Endothelial cell of umbilical vein (primary cell): ENCODE measurements at regions of chr7 and their contacts with region 1.

Region 1: GRCh38 chr7:56079450-56080185 is 13.1 kb downstream of the PHKG1 start:
- DNase-seq: peak; percentile 93
- H3K4me3 ChIP-seq: no peak overlapping the region
- H3K27ac ChIP-seq: peak overlapping the region; percentile 73
- H3K4me1 ChIP-seq: peaks cover 26% of the 10 kb centered on the region
- H3K27me3 ChIP-seq: no peaks in the 10 kb centered on the region
- CTCF ChIP-seq: peak; percentile 89 to 92
- POLR2A ChIP-seq: no peak

Region 2: GRCh38 chr7:55895021-55895420 is 184.6 kb before region 1 on chr7:
- CTCF ChIA-PET with region 1: no interaction called
- POLR2A ChIA-PET with region 1: no interaction called
- dilution Hi-C with region 1: no loop called
- intact Hi-C with region 1: no loop called
- DNase-seq: no peak
- H3K4me3 ChIP-seq: no peak overlapping the region
- H3K27ac ChIP-seq: no peak overlapping the region
- H3K4me1 ChIP-seq: peaks cover 3% of the 10 kb centered on the region
- H3K27me3 ChIP-seq: no peaks in the 10 kb centered on the region
- CTCF ChIP-seq: no peak
- POLR2A ChIP-seq: no peak

Region 3: DNA sequence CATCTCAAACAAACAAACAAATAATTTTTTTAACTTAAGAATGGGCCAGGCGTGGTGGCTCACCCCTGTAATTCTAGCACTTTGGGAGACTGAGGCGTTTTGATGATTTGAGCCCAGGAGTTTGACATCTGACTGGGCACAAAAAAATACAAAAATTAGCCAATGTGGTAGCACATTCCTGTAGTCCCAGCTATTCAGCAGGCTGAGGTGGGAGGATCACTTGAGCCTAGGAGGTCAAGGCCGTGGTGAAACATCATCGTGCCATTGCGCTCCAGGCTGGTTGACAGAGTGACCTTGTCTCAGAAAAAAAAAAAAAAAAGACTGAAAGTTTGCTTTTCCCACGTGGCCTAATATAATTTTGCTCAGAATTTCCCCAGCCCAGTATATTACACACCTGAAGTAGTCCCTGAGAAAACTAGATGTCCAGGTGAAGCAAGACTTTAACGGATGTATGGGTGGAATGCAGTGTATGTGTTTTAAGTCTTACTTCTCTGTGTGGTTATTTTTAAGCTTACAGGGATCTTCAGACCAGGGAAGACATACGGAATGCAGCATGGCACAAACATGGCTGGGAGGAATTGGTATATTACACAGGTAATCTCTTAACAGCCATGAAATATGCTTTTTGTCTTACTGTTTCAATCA is 82.6 kb before region 1 on chr7:
- CTCF ChIA-PET with region 1: interaction called, 30 read pairs
- POLR2A ChIA-PET with region 1: no interaction called
- dilution Hi-C with region 1: no loop called
- intact Hi-C with region 1: no loop called
- DNase-seq: no peak
- H3K4me3 ChIP-seq: no peak overlapping the region
- H3K27ac ChIP-seq: no peak overlapping the region
- H3K4me1 ChIP-seq: peaks cover 10% of the 10 kb centered on the region
- H3K27me3 ChIP-seq: no peaks in the 10 kb centered on the region
- CTCF ChIP-seq: no peak
- POLR2A ChIP-seq: no peak

Region 4: GRCh38 chr7:56106108-56107073 is 26.8 kb after region 1 on chr7 and contains the start of gene CHCHD2:
- CTCF ChIA-PET with region 1: interaction called, 11 read pairs
- POLR2A ChIA-PET with region 1: no interaction called
- dilution Hi-C with region 1: no loop called
- intact Hi-C with region 1: loop called (anchors 2 kb)
- DNase-seq: peak; percentile 98
- H3K4me3 ChIP-seq: peak within 1 kb of the TSS; percentile 54 to 87 (median 86)
- H3K27ac ChIP-seq: peak within 1 kb of the TSS; percentile 77
- H3K4me1 ChIP-seq: peaks cover 4% of the 10 kb centered on the region
- H3K27me3 ChIP-seq: no peaks in the 10 kb centered on the region
- CTCF ChIP-seq: no peak
- POLR2A ChIP-seq: peak; percentile 70
- total RNA-seq, gene CHCHD2: 368 and 378 TPM in 2 replicates